H1 (cell line): ENCODE measurements at regions of chr15 and their contacts with region 1.

Region 1: DNA sequence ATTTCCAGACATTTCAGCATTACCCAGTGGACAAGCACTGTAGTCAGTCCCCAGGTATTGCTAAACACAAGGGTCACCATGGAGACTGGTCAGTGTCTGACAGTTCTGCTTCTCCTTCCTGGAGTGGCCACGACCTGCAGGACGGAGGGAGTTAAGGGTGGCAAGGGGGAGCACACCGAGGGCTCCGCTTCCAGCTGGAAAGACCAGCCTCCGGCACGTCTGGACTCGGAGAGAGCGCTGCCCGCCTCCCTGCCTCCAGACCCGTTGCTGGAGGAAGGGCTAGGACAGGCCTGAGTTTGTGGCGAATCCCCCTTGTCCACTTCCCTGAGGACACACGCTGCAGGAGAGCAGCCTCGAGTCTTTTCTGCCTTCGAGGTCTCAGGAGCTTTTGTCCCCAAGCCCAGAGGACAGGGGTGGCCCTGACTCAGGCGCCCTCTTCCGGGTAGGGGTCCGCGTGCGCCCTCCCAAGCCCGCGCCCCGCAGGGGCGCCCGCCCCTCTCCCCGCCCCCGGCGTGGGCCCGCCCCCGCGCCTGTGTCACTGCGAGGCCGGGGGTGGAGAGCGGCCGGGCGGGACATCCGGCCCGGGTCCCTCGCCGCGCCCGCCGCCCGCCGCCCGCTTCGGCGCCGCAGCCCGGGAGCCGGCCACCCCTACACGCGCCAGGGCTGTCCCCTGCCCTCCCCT is at the start of gene CHST14:
- DNase-seq: peak; percentile 27 to 72
- H3K4me3 ChIP-seq: peak within 1 kb of the TSS; percentile 68 to 87 (median 71)
- H3K27ac ChIP-seq: peak within 1 kb of the TSS; percentile 57; the same call in 1 of the 2 replicates
- H3K4me1 ChIP-seq: peaks cover 0 to 17% (median 10%) of the 10 kb centered on the region in 4 experiments; a peak in 6 of 7 replicates
- H3K27me3 ChIP-seq: peaks cover 0 to 3% (median 0%) of the 10 kb centered on the region in 4 experiments; a peak in 1 of 7 replicates
- CTCF ChIP-seq: no peak
- EP300 ChIP-seq: no peak
- POLR2A ChIP-seq: 0 out of 3 replicates have a peak, but pooled peaks of 1 of the 2 experiments have one; percentile 8
- RAD21 ChIP-seq: no peak
- total RNA-seq, gene CHST14: 17.7 and 20.3 TPM in 2 replicates

Region 2: DNA sequence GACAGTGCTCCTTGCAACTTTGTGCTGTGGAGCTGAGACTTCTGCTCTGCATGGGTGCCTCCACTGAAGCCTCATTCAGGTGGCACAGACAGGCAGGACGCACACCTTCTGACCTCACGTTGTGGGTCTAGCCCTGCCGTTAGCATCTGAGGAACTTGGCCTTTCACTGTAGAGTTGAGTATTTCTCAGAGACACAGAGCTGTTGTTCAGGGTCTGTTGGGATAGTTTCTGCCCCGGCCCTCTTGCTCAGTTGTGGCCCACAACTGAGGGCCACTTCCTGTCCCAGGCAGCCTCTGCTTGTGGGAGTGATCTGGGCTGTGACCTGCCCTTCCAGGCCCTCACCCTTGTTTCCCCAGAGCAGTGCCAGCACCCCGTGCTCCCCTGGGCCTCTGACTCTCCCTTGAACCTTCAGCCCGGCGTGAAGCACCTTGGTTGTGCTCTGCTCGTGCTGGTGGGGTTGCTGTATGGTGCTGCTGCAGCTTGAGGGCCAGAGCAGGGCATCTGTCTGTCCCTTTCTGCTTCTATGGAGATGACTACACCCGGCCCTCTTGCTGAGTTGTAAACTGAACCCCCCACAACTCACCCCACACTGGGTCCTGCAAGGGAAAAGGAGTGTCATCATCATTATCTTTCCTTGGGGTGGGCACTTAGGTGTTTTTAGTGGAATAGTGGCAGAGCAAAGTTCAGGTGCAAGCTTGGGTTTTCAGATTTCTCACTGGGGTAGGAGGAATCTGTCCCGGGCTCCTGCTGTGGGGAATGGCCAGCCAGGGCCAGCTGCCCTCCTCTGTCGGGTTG is 18.1 kb before region 1 on chr15:
- CTCF ChIA-PET with region 1: interaction called, 12 read pairs
- POLR2A ChIA-PET with region 1: interaction called, 5 read pairs
- DNase-seq: no peak
- H3K4me3 ChIP-seq: no peak overlapping the region; a peak in 1 of 8 replicates
- H3K27ac ChIP-seq: no peak overlapping the region; the same call in 1 of the 2 replicates
- H3K4me1 ChIP-seq: peaks cover 4 to 41% (median 19%) of the 10 kb centered on the region in 4 experiments
- H3K27me3 ChIP-seq: no peaks in the 10 kb centered on the region
- CTCF ChIP-seq: no peak
- EP300 ChIP-seq: no peak
- POLR2A ChIP-seq: no peak
- RAD21 ChIP-seq: no peak

Region 3: GRCh38 chr15:40458495-40459394 is 11.8 kb before region 1 on chr15:
- CTCF ChIA-PET with region 1: interaction called, 10 read pairs
- POLR2A ChIA-PET with region 1: interaction called, 7 read pairs
- DNase-seq: no peak
- H3K4me3 ChIP-seq: no peak overlapping the region
- H3K27ac ChIP-seq: no peak overlapping the region; the same call in 1 of the 2 replicates
- H3K4me1 ChIP-seq: peaks cover 0 to 13% (median 5%) of the 10 kb centered on the region in 4 experiments; a peak in 6 of 7 replicates
- H3K27me3 ChIP-seq: no peaks in the 10 kb centered on the region
- CTCF ChIP-seq: no peak
- EP300 ChIP-seq: no peak
- POLR2A ChIP-seq: no peak
- RAD21 ChIP-seq: no peak